ENCODE measurements at regions of chr3 and their contacts with region 1.

Region 1: DNA sequence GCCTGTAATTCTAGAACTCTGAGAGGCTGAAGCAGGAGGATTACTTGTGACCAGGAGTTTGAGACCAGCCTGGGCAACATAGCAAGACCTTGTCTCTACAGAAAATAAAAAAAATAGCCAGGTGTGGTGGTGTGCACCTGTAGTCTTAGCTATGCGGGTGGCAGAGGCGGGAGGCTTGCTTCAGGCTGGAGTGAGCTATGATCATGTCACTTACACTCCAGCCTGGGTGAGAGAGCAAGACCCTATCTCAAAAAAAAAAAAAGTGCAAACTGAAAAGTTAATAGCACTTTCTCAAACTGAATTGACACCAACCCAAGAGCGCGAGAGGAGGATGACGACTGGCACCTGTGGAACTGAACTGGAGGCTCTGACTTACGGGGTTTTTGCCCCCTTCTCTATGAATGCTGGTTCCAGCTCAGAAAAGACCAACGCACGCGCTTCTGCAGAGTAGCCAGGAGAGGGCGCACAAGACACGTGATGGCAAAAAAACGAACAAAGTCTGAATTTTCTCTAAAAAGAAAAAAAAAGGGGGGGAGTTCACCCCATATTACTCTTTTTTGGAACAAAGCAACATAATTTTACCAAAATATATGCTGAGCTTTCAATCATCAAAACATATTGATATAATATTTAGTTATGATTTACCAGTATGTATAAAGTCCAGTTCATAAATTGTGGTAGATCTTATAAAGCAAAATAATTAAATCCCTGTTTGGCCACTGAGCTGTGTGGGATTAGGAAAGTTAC is 23.7 kb downstream of the CFAP92 start:
- DNase-seq: peak in 1 of 2 experiments; percentile 37
- ATAC-seq: peak; percentile 62 to 78; a peak in 4 of 6 replicates
- H3K4me3 ChIP-seq: no peak overlapping the region
- H3K27ac ChIP-seq: no peak overlapping the region
- H3K4me1 ChIP-seq: no peaks in the 10 kb centered on the region
- CTCF ChIP-seq: peak; percentile 82
- EP300 ChIP-seq: no peak
- POLR2A ChIP-seq: no peak
- RAD21 ChIP-seq: peak; percentile 82 to 84

Region 2: GRCh38 chr3:128683957-128684356 is 286.2 kb before region 1 on chr3:
- CTCF ChIA-PET with region 1: no interaction called
- POLR2A ChIA-PET with region 1: no interaction called
- DNase-seq: no peak
- ATAC-seq: no peak
- H3K4me3 ChIP-seq: no peak overlapping the region
- H3K27ac ChIP-seq: no peak overlapping the region
- H3K4me1 ChIP-seq: 0 out of 3 replicates have a peak, but pooled peaks cover 5% of the 10 kb centered on the region
- CTCF ChIP-seq: no peak
- EP300 ChIP-seq: no peak
- POLR2A ChIP-seq: no peak
- RAD21 ChIP-seq: no peak

Region 3: GRCh38 chr3:128993461-128994173 is 23.5 kb after region 1 on chr3 and contains the start of gene CFAP92:
- CTCF ChIA-PET with region 1: interaction called, 10 read pairs
- POLR2A ChIA-PET with region 1: no interaction called
- DNase-seq: peak; percentile 54 to 72
- ATAC-seq: peak; percentile 86 to 98
- H3K4me3 ChIP-seq: peak within 1 kb of the TSS; percentile 38
- H3K27ac ChIP-seq: 0 out of 6 replicates have a peak within 1 kb of the TSS, but pooled peaks of 1 of the 2 experiments have one; percentile 37
- H3K4me1 ChIP-seq: no peaks in the 10 kb centered on the region
- CTCF ChIP-seq: no peak
- EP300 ChIP-seq: no peak
- POLR2A ChIP-seq: no peak
- RAD21 ChIP-seq: no peak
- polyA plus RNA-seq, gene CFAP92: 0.05 TPM in 1 of 2 replicates, not detected in the other

Region 4: GRCh38 chr3:129026728-129027543 is 56.8 kb after region 1 on chr3:
- CTCF ChIA-PET with region 1: interaction called, 17 read pairs
- POLR2A ChIA-PET with region 1: no interaction called
- DNase-seq: peak; percentile 88 to 93
- ATAC-seq: peak; percentile 99 to 100
- H3K4me3 ChIP-seq: peak overlapping the region; percentile 54
- H3K27ac ChIP-seq: peak overlapping the region; percentile 77 to 89
- H3K4me1 ChIP-seq: no peaks in the 10 kb centered on the region
- CTCF ChIP-seq: peak; percentile 61
- EP300 ChIP-seq: no peak
- POLR2A ChIP-seq: peak; percentile 31
- RAD21 ChIP-seq: 0 out of 5 replicates have a peak, but pooled peaks of 1 of the 2 experiments have one; percentile 18

Region 5: GRCh38 chr3:129068291-129068886 is 98.2 kb after region 1 on chr3:
- CTCF ChIA-PET with region 1: interaction called, 10 read pairs
- POLR2A ChIA-PET with region 1: no interaction called
- DNase-seq: no peak
- ATAC-seq: no peak
- H3K4me3 ChIP-seq: no peak overlapping the region
- H3K27ac ChIP-seq: no peak overlapping the region
- H3K4me1 ChIP-seq: no peaks in the 10 kb centered on the region
- CTCF ChIP-seq: no peak
- EP300 ChIP-seq: no peak
- POLR2A ChIP-seq: no peak
- RAD21 ChIP-seq: no peak

Region 6: GRCh38 chr3:129120254-129121004 is 150.3 kb after region 1 on chr3:
- CTCF ChIA-PET with region 1: interaction called, 25 read pairs
- POLR2A ChIA-PET with region 1: no interaction called
- DNase-seq: peak; percentile 67 to 89
- ATAC-seq: peak; percentile 63 to 72; a peak in 5 of 6 replicates
- H3K4me3 ChIP-seq: peak overlapping the region; percentile 61
- H3K27ac ChIP-seq: peak overlapping the region; percentile 73 to 91
- H3K4me1 ChIP-seq: peaks cover 37% of the 10 kb centered on the region
- CTCF ChIP-seq: no peak
- EP300 ChIP-seq: no peak
- POLR2A ChIP-seq: no peak
- RAD21 ChIP-seq: no peak

Region 7: DNA sequence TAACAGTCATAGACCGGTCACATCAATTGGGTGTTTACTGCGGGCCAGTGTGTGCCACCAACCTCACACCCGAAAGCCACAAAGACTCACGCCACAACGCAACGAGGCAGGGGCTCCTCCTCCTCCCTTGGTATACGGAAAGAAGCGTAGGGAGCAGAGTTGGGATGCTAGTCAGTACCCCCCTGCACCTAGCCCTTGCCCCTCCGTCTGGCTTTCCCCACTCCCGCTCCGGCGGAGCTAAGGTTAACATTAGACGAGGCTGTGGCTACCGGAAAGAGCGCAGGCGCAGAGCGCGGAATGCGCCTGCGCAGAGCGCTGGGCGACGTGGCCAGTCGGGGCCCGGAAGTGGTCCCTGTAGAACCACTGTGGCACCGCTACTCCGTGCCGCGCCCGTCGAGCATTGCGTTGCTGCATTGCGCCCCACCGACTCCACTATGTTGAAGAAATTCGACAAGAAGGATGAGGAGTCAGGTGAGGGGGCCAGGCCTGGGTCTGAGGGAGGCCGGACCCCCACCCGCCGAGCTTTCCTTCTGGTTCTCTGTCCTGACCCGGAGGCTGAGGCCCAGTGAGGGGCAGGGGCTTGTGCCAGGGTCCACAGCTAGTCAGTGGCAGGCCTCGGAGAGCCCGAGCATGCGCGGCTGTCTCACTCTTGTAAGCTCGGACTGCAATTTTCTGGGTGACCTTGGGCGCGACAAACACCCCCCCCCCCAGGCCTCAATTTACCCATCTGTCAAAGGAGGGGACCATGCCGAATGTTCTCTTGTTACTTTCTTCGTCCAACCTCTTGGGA is 279.3 kb after region 1 on chr3 and contains the start of gene COPG1:
- CTCF ChIA-PET with region 1: interaction called, 21 read pairs
- POLR2A ChIA-PET with region 1: interaction called, 4 read pairs
- DNase-seq: peak; percentile 83 to 90
- ATAC-seq: peak; percentile 88 to 93
- H3K4me3 ChIP-seq: peak within 1 kb of the TSS; percentile 85
- H3K27ac ChIP-seq: peak within 1 kb of the TSS; percentile 95 to 98
- H3K4me1 ChIP-seq: peaks cover 21% of the 10 kb centered on the region; the same call in 2 of the 3 replicates
- CTCF ChIP-seq: no peak
- EP300 ChIP-seq: no peak
- POLR2A ChIP-seq: peak; percentile 84
- RAD21 ChIP-seq: no peak
- polyA plus RNA-seq, gene COPG1: 86.5 and 90.2 TPM in 2 replicates